ENCODE measurements at regions of chr12 and their contacts with region 1.

Region 1: DNA sequence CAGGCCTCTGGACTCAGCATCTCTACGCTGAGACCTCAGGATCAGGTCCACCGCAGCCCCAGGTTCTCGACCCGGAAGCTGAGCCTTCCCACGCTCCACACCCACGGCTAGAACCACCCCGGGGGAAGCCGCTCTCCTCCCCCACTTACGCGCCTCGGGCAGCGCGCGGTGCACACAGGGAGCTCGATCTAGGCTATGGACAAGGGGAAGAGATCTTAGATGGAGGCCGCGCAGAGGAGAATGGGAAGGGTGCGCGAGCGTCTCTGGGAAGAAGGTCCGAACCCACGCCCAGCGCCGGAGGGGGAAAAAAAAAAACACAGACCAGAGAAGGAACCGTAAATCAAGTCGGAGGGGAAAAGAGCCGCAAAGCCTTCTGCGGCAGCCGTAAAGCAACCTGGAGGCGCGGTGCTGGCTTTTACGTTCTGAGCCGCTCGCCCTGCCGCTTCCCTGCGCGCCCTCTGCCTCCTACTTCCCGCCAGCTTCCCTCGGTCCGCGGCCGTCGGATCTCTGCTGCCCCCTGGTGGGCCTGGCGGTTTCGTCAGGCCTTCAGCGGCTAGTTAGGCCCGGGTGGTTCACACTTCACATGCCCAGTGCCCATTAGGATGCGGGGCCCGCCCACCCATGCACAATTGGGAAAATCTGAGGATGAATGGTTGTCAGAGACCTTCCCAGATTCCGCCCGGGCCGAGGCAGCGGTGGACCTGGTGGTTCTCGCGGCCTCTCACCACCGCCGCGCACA is at the start of gene RAD52:
- DNase-seq: peak; percentile 98
- ATAC-seq: peak; percentile 97 to 98 (median 97)
- H3K4me3 ChIP-seq: peak within 1 kb of the TSS; percentile 54 to 96 (median 78)
- H3K27ac ChIP-seq: peak within 1 kb of the TSS; percentile 65 to 96 (median 92)
- H3K4me1 ChIP-seq: peaks cover 0 to 38% (median 11%) of the 10 kb centered on the region in 9 donors
- H3K27me3 ChIP-seq: no peaks in the 10 kb centered on the region
- CTCF ChIP-seq: peak; percentile 96 to 100 (median 98)
- total RNA-seq, gene RAD52: 4.8 to 9.6 (median 6.1) TPM

Region 2: GRCh38 chr12:818733-819132 is 130.9 kb before region 1 on chr12:
- intact Hi-C with region 1: loop called in 2 of 10 experiments (anchors 5 kb)
- DNase-seq: no peak
- ATAC-seq: no peak
- H3K4me3 ChIP-seq: no peak overlapping the region
- H3K27ac ChIP-seq: peak overlapping the region in 3 of 10 donors; percentile 1 to 30 (median 16)
- H3K4me1 ChIP-seq: peaks cover 0 to 38% (median 21%) of the 10 kb centered on the region in 9 donors
- H3K27me3 ChIP-seq: no peaks in the 10 kb centered on the region
- CTCF ChIP-seq: peak in 1 of 9 donors; percentile 6

Region 3: GRCh38 chr12:990661-991349 is 41.2 kb after region 1 on chr12 and contains the start of gene ERC1:
- intact Hi-C with region 1: loop called in 7 of 10 experiments (anchors 1 to 5 kb)
- DNase-seq: peak; percentile 90 to 91
- ATAC-seq: peak; percentile 95 to 98 (median 96)
- H3K4me3 ChIP-seq: peak within 1 kb of the TSS; percentile 80 to 96 (median 90)
- H3K27ac ChIP-seq: peak within 1 kb of the TSS; percentile 94 to 100 (median 98)
- H3K4me1 ChIP-seq: peaks cover 0 to 49% (median 29%) of the 10 kb centered on the region in 9 donors
- H3K27me3 ChIP-seq: no peaks in the 10 kb centered on the region
- CTCF ChIP-seq: peak in 2 of 9 donors; percentile 9 to 34
- total RNA-seq, gene ERC1: 37.7 to 67.5 (median 49.5) TPM

Region 4: GRCh38 chr12:1093166-1093751 is 143.6 kb after region 1 on chr12:
- intact Hi-C with region 1: loop called in 6 of 10 experiments (anchors 5 to 10 kb)
- DNase-seq: peak in 1 of 2 donors; percentile 51
- ATAC-seq: peak in 4 of 8 donors; percentile 56 to 77 (median 64)
- H3K4me3 ChIP-seq: no peak overlapping the region
- H3K27ac ChIP-seq: no peak overlapping the region
- H3K4me1 ChIP-seq: peaks cover 0 to 19% (median 7%) of the 10 kb centered on the region in 9 donors
- H3K27me3 ChIP-seq: no peaks in the 10 kb centered on the region
- CTCF ChIP-seq: peak; percentile 38 to 86 (median 72)

Region 5: GRCh38 chr12:1350055-1350933 is 400.7 kb after region 1 on chr12:
- intact Hi-C with region 1: no loop called
- DNase-seq: no peak
- ATAC-seq: peak in 6 of 8 donors; percentile 22 to 66 (median 40)
- H3K4me3 ChIP-seq: no peak overlapping the region
- H3K27ac ChIP-seq: peak overlapping the region in 1 of 10 donors; percentile 7
- H3K4me1 ChIP-seq: peaks cover 0 to 7% (median 0%) of the 10 kb centered on the region in 9 donors
- H3K27me3 ChIP-seq: no peaks in the 10 kb centered on the region
- CTCF ChIP-seq: no peak

Region 6: DNA sequence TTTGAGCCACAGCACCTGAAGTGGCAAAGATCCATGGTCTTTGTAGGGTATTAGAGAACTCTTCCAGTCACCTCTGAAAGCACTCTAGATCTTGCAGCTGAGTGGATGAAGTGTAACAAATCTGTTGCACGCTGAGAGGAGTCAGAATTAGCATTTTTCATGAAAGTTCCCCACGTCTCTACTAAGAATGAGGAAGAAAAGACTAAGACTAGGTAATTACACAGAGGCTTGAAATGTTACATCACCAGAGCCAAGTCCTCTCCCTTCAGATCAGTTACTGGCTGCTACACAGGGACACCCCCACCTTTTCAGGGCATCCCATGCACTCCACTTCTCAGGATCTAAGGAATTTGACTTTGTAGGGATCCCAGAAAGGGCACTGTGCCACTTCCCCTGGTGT is 1746.5 kb after region 1 on chr12:
- intact Hi-C with region 1: loop called in 1 of 10 experiments (anchors 10 kb)
- DNase-seq: no peak
- ATAC-seq: no peak
- H3K4me3 ChIP-seq: no peak overlapping the region
- H3K27ac ChIP-seq: no peak overlapping the region
- H3K4me1 ChIP-seq: peaks cover 0 to 22% (median 5%) of the 10 kb centered on the region in 9 donors
- H3K27me3 ChIP-seq: peaks cover 0 to 19% (median 0%) of the 10 kb centered on the region in 7 donors
- CTCF ChIP-seq: no peak

Measured in heart right ventricle (tissue), 16 donors.